T-cell (primary cell): ENCODE measurements at regions of chr22 and their contacts with region 1.

Region 1: GRCh38 chr22:45413368-45414211 is at the starts of genes RIBC2 and SMC1B:
- DNase-seq: peak; percentile 40 to 81 (median 68)
- ATAC-seq: peak; percentile 89 to 99 (median 94)
- H3K4me3 ChIP-seq: peak within 1 kb of the TSS; percentile 35 to 63
- H3K4me3 Mint-ChIP-seq: peak within 1 kb of the TSS; percentile 70 to 79 (median 78)
- H3K27ac ChIP-seq: peak within 1 kb of the TSS; percentile 27
- H3K27ac Mint-ChIP-seq: no peak within 1 kb of the TSS
- H3K4me1 ChIP-seq: peaks cover 0 to 14% of the 10 kb centered on the region in 2 experiments
- H3K4me1 Mint-ChIP-seq: peaks cover 0 to 20% (median 10%) of the 10 kb centered on the region in 3 donors
- H3K27me3 ChIP-seq: peaks cover 0 to 7% of the 10 kb centered on the region in 2 experiments
- H3K27me3 Mint-ChIP-seq: peaks cover 0 to 1% of the 10 kb centered on the region in 2 donors
- total RNA-seq, gene RIBC2: 0.61 to 0.89 (median 0.78) TPM in 3 of 5 donors, not detected in the others
- total RNA-seq, gene SMC1B: 0.06 to 0.12 (median 0.06) TPM in 3 of 5 donors, not detected in the others

Region 2: DNA sequence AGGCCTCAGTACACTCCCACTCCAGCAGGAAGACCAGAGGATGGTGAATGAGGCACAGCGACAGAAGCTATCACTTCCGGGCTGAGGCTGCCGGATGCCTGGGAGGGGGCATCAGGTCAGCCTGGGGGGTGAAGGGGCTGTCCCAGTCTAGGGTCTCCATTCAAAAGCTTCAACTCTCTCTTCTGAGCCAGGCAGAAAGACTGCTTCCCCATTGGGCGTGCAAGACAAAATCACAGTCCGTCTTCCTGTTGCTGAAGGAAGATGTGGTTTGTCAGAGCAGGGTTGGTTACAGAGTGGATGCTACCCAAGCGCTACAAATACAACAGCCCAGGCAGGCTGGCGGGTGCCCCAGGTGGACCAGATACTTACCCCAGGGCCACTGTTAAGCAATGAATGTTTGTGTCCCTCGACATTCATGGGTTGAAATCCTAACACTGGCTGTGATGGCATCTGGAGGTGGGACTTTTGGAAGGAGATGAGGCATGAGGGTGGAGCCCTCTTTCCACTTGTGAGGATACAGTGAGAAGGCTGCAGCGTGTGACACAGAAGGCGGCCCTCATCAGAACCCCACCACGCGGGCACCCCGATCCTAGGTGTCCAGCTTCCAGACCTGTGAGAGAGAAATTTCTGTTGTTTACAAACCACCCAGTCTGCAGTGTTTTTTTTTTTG is 116.8 kb before region 1 on chr22:
- CTCF ChIA-PET with region 1: no interaction called
- POLR2A ChIA-PET with region 1: no interaction called
- DNase-seq: peak; percentile 22 to 72 (median 43)
- ATAC-seq: peak; percentile 94 to 97 (median 97)
- H3K4me3 ChIP-seq: no peak overlapping the region
- H3K4me3 Mint-ChIP-seq: peak overlapping the region; percentile 1 to 61 (median 31)
- H3K27ac ChIP-seq: peak overlapping the region; percentile 70
- H3K27ac Mint-ChIP-seq: peak overlapping the region; percentile 92 to 94
- H3K4me1 ChIP-seq: peaks cover 6 to 33% of the 10 kb centered on the region in 2 experiments
- H3K4me1 Mint-ChIP-seq: peaks cover 26 to 29% (median 28%) of the 10 kb centered on the region in 3 donors
- H3K27me3 ChIP-seq: no peaks in the 10 kb centered on the region
- H3K27me3 Mint-ChIP-seq: no peaks in the 10 kb centered on the region

Region 3: GRCh38 chr22:45435544-45436139 is 22.1 kb after region 1 on chr22:
- CTCF ChIA-PET with region 1: no interaction called
- POLR2A ChIA-PET with region 1: interaction called in 1 of 2 experiments, 11 read pairs
- DNase-seq: peak; percentile 48 to 88 (median 72)
- ATAC-seq: peak; percentile 83 to 97 (median 95)
- H3K4me3 ChIP-seq: no peak overlapping the region
- H3K4me3 Mint-ChIP-seq: peak overlapping the region in 1 of 3 donors; percentile 57
- H3K27ac ChIP-seq: no peak overlapping the region
- H3K27ac Mint-ChIP-seq: peak overlapping the region in 1 of 2 donors; percentile 16
- H3K4me1 ChIP-seq: peaks cover 0 to 8% of the 10 kb centered on the region in 2 experiments
- H3K4me1 Mint-ChIP-seq: peaks cover 12 to 17% (median 12%) of the 10 kb centered on the region in 3 donors
- H3K27me3 ChIP-seq: no peaks in the 10 kb centered on the region
- H3K27me3 Mint-ChIP-seq: peaks cover 0 to 2% of the 10 kb centered on the region in 2 donors